ENCODE measurements at regions of chr12 and their contacts with region 1.

Region 1: DNA sequence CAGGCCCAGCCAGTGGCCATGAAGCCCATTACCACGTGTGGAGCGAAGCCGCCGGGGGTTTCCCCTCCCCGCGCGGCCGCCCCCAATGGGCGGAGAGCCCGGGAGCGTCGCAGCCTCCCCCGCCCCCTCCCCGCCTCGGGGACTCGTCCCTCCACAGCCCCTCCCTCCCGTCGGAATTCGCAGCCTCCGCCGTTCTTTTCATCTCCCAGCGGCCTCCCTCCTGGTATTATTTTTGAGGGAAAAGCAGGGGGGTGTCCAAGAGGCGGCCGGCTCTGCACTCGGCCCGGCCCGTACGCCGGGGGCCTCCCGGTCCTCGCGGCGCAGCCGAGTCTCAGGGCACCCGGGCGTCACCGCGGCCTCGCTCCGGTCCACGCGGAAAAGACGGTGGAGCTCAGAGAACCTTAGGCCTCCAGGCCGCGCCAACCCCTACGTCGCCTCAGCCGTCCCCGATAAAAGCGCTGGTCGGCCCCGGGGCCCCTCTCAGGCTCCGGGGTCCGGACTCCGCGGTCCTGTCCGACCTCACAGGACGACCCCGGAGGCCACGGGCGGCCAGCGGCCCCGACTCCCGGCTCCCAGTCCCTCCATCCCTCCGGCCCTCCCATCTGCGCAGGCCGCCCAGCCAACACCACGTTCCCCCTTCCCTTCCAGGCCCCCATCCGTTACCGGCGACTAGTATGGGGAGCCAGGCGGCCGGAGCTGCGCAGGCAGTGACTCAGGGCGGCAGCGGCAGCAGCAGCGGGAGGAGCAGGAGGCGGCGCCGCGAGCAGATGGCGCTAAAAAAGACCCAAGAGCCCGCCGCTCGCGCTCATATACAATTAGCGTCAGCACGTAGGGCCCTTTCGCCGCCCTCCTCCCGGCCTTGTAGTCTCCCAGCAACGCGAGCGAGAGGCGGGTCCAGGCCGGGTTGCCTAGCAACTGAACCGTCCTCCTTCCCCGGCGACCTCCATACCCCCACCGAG is at the start of gene NAP1L1:
- DNase-seq: peak; percentile 98
- ATAC-seq: peak; percentile 86
- H3K4me3 Mint-ChIP-seq: peak within 1 kb of the TSS; percentile 79
- H3K27ac Mint-ChIP-seq: peak within 1 kb of the TSS; percentile 98
- H3K4me1 Mint-ChIP-seq: peaks cover 44% of the 10 kb centered on the region
- H3K27me3 Mint-ChIP-seq: no peaks in the 10 kb centered on the region
- total RNA-seq, gene NAP1L1: 959 to 1,004 TPM

Region 2: DNA sequence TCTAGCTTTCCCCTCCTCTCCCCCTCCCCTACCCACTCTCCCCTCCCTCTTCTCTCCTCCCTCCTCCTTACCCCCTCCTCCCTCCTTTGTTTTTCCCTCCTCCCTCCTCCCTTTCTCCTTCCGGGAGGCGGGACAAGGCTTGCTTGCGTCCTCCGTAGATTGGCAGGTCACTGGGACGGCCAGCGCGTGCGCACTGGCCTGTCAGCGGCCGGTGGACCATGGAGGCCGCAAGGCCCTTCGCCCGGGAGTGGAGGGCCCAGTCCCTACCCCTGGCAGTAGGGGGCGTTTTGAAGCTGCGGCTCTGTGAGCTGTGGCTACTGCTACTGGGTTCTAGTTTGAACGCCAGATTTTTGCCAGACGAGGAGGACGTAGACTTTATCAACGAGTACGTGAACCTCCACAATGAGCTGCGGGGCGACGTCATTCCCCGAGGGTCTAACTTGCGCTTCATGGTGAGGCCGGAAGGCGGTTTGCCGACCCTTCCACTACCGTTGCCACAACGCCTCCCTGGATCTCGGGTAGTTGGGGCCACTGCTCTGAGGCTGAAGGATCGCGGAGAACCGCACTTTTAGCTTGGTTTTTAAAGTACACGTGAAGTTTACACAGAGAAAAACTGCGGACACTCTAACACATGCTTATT is 693.2 kb before region 1 on chr12 and contains the start of gene GLIPR1L2:
- CTCF ChIA-PET with region 1: no interaction called
- POLR2A ChIA-PET with region 1: no interaction called
- intact Hi-C with region 1: loop called in 1 of 2 experiments (anchors 2 kb)
- DNase-seq: peak; percentile 95
- ATAC-seq: peak; percentile 97
- H3K4me3 Mint-ChIP-seq: peak within 1 kb of the TSS; percentile 93
- H3K27ac Mint-ChIP-seq: peak within 1 kb of the TSS; percentile 97
- H3K4me1 Mint-ChIP-seq: peaks cover 49% of the 10 kb centered on the region
- H3K27me3 Mint-ChIP-seq: no peaks in the 10 kb centered on the region
- total RNA-seq, gene GLIPR1L2: 0.39 to 0.50 TPM

Region 3: DNA sequence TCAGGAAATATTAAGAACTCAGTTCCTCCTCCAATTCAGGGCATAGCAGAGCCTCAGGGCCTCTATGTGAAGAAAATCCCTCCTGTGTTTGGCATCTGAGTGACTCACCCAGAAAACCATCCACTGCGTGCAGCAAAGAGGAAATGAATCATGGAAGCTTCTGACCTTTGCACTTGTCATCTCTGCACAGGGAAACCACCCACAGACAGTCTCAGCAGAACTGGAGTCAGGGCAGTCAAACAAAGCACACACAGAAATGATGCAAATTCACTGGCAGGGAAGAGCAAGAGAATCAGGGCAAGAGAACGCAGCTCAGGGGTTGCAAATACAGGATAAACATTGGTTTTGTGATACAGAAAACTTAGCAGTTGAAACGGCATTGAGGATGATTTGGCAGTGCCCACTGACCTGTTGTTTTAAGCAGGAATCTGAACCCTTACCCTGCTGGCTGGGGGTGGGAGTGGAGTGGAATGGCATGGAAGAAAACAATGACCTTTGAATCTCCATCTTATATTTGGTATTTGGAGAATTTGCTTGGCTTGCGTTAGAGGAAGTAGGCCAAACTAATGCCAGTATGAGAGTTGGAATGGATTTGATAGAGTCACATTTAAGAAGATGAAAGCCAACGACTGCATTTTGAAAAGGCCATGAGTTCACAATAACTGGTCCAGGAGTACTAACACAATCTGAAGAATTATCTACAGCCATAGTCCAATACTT is 106.1 kb before region 1 on chr12:
- CTCF ChIA-PET with region 1: no interaction called
- POLR2A ChIA-PET with region 1: no interaction called
- intact Hi-C with region 1: loop called in 1 of 2 experiments (anchors 1 kb)
- DNase-seq: peak; percentile 85
- ATAC-seq: peak; percentile 80
- H3K4me3 Mint-ChIP-seq: peak overlapping the region; percentile 59
- H3K27ac Mint-ChIP-seq: peak overlapping the region; percentile 100
- H3K4me1 Mint-ChIP-seq: peaks cover 69% of the 10 kb centered on the region
- H3K27me3 Mint-ChIP-seq: no peaks in the 10 kb centered on the region

Region 4: DNA sequence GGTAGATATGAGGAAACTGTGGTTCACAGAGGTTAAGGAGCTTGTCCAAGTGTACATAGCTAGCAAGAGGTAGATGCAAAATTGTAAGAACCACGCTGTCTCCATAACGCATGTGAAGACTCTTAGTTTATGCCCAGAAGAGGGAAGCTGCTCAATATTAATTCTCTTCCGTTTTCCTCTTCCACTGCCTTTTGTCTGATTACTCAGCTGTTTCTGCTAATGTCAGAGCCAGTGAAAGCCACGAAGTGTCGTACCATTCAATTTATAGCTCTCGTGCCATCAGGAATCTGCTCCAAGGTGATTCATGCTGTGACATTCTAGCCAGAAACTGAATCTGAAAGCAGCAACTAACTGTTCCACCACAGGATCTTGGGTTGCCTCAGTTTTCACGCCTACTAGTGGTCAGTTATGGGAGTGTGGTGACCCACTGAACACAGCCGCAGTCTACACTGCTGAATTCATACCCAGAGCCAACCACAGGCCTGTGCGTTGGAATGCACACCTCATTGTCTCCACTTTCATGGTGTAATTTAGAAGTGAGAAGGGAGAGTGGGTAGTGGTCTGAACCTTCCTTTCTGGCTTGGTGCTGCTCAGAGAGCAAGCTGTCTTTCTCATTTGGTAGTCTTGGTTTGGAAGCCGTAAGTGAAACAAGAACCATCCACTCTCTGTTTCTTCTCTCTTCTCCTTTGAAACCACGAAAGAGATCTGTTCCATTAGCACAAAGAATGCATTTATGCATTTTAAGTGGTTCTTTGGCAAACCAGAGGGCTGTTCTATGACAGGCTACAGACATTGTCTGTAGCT is 74.5 kb after region 1 on chr12:
- CTCF ChIA-PET with region 1: no interaction called
- POLR2A ChIA-PET with region 1: no interaction called
- intact Hi-C with region 1: loop called (anchors 1 to 2 kb)
- DNase-seq: peak; percentile 85
- ATAC-seq: peak; percentile 97
- H3K4me3 Mint-ChIP-seq: peak overlapping the region; percentile 18
- H3K27ac Mint-ChIP-seq: peak overlapping the region; percentile 26
- H3K4me1 Mint-ChIP-seq: peaks cover 15% of the 10 kb centered on the region
- H3K27me3 Mint-ChIP-seq: peaks cover 2% of the 10 kb centered on the region

Region 5: DNA sequence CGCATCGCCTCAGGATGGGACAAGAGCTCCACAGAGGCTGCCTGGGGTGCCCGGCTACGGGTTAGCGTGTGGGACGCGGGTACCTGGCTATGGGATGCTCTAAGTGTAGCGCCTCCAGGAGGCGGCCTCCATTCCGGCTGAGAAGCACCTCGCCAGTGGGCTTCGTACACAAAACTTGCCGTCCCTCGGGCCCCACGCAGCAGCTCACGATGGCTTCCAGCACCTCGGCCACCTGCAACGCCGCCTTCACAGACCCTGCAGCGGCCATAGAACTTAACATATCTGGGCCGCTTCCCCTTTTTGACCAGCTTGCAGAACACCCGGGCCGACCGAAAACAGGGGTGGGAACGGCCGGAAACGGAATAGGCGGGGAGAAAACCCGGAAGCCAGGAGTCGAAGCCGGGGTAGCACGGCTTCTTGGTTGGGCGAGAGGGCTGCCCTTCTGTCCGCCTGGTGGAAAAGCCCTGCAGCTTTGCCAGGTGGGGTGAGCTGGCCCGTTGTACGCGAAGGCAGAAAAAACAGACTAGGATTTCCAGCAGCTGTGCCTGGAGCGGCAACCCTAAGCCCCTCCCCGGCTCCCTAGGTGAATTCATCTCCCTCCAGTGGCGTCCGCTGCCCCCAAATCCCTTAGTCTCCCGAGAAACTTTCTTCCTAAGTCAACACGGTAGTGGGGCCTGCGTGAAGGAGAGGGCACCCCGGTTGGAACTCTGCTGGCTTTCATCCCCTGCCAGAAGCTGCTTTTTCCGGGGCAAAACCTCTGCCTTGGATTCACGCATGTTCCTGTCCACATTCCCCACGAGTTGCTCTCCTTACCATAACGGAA is 264.1 kb after region 1 on chr12 and contains the start of gene BBS10:
- CTCF ChIA-PET with region 1: interaction called, 3 read pairs
- POLR2A ChIA-PET with region 1: interaction called, 6 read pairs
- intact Hi-C with region 1: loop called (anchors 1 kb)
- DNase-seq: peak; percentile 92
- ATAC-seq: peak; percentile 93
- H3K4me3 Mint-ChIP-seq: peak within 1 kb of the TSS; percentile 88
- H3K27ac Mint-ChIP-seq: peak within 1 kb of the TSS; percentile 94
- H3K4me1 Mint-ChIP-seq: peaks cover 21% of the 10 kb centered on the region
- H3K27me3 Mint-ChIP-seq: no peaks in the 10 kb centered on the region
- total RNA-seq, gene BBS10: 3.5 to 4.0 TPM

Region 6: GRCh38 chr12:76763743-76764675 is 679.8 kb after region 1 on chr12 and contains the start of gene ZDHHC17:
- CTCF ChIA-PET with region 1: no interaction called
- POLR2A ChIA-PET with region 1: no interaction called
- intact Hi-C with region 1: loop called (anchors 1 to 5 kb)
- DNase-seq: peak; percentile 93
- ATAC-seq: peak; percentile 89
- H3K4me3 Mint-ChIP-seq: peak within 1 kb of the TSS; percentile 96
- H3K27ac Mint-ChIP-seq: peak within 1 kb of the TSS; percentile 97
- H3K4me1 Mint-ChIP-seq: peaks cover 41% of the 10 kb centered on the region
- H3K27me3 Mint-ChIP-seq: no peaks in the 10 kb centered on the region
- total RNA-seq, gene ZDHHC17: 17.6 to 22.7 TPM

Measured in activated CD4-positive, alpha-beta T cell treated with anti-CD3 and anti-CD28 coated beads for 36 hours (primary cell).